Heart left ventricle (tissue), 16 donors: ENCODE measurements at regions of chr18 and their contacts with region 1.

Region 1: DNA sequence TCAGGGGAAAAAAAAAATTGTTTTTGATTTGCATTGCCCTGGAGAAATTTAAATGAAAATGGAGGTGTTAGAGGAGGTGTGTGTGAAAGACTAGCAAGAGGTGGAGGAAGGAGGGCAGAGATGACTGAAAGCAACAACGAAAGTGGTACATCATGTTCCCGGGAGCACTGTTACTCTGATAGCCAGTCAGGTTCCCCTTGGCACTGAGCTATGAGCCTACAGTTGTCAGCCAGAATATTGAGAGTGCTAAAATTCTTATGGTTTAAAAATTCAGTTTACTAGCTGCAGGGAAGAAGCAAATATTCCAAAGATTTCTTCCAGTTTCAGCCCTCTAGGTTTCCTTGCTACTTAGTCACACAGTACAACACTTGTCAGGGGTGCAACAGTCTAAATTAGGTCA is 366.7 kb upstream of the DLGAP1 start:
- DNase-seq: no peak
- ATAC-seq: no peak
- H3K4me3 ChIP-seq: no peak overlapping the region
- H3K27ac ChIP-seq: no peak overlapping the region
- H3K4me1 ChIP-seq: no peaks in the 10 kb centered on the region
- H3K27me3 ChIP-seq: no peaks in the 10 kb centered on the region
- CTCF ChIP-seq: no peak
- POLR2A ChIP-seq: no peak

Region 2: GRCh38 chr18:4658804-4659203 is 163.0 kb before region 1 on chr18:
- intact Hi-C with region 1: no loop called
- DNase-seq: no peak
- ATAC-seq: no peak
- H3K4me3 ChIP-seq: no peak overlapping the region
- H3K27ac ChIP-seq: no peak overlapping the region
- H3K4me1 ChIP-seq: no peaks in the 10 kb centered on the region
- H3K27me3 ChIP-seq: no peaks in the 10 kb centered on the region
- CTCF ChIP-seq: no peak
- POLR2A ChIP-seq: no peak

Region 3: DNA sequence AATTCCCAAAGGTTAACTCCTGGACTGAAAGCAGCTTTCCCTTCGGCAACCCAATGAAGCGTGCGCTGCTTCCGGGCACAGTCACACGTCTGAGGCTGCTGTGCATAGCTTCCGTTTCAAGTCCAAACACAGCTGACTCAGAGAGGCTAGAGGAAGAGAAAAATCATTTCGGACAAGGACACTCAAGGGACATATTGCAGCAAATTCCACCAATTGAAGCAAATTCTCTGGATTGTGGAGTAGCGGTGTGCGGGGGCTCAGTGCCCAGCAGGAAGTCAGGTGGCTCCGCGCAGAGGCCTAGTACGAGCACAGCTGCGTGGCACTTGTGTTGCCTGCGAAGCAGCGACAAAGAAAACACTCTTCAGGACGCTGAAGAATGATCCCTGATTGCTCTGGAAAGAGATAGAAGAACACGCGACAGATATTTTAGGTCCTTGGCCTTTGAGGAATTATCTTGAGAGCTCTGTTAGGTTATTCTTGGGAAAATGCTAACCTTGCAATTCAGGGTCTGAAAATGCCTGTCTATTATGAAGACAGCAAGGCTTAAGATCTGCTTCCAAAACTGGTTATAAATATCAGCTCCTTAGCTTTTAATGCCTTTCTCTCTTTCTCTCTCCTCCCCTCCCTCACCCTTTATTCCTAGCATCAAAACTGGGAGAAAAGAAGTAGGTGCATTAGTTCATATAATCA is 14.1 kb before region 1 on chr18:
- intact Hi-C with region 1: no loop called
- DNase-seq: no peak
- ATAC-seq: peak in 1 of 4 donors; percentile 20
- H3K4me3 ChIP-seq: no peak overlapping the region
- H3K27ac ChIP-seq: peak overlapping the region in 1 of 12 donors; percentile 13
- H3K4me1 ChIP-seq: no peaks in the 10 kb centered on the region
- H3K27me3 ChIP-seq: no peaks in the 10 kb centered on the region
- CTCF ChIP-seq: no peak
- POLR2A ChIP-seq: no peak

Region 4: GRCh38 chr18:6683112-6683876 is 1861.5 kb after region 1 on chr18:
- intact Hi-C with region 1: loop called in 1 of 10 experiments (anchors 10 kb)
- DNase-seq: peak in 3 of 5 donors; percentile 30 to 68 (median 52)
- ATAC-seq: peak; percentile 42 to 88 (median 64)
- H3K4me3 ChIP-seq: no peak overlapping the region
- H3K27ac ChIP-seq: peak overlapping the region in 1 of 12 donors; percentile 42
- H3K4me1 ChIP-seq: peaks cover 0 to 6% (median 0%) of the 10 kb centered on the region in 12 donors
- H3K27me3 ChIP-seq: no peaks in the 10 kb centered on the region
- CTCF ChIP-seq: no peak
- POLR2A ChIP-seq: no peak